Dendritic cell treated with granulocyte-macrophage colony-stimulating factor and Interleukin-4, amounts not matched to agents 40 ng/mL and 50 ng/mL, for 4 days (primary cell): ENCODE measurements at regions of chr4 and their contacts with region 1.

Region 1: GRCh38 chr4:22688236-22688635 is 4.5 kb upstream of the GBA3 start:
- H3K4me3 Mint-ChIP-seq: no peak overlapping the region
- H3K27ac Mint-ChIP-seq: no peak overlapping the region
- H3K4me1 Mint-ChIP-seq: peaks cover 7% of the 10 kb centered on the region
- H3K27me3 Mint-ChIP-seq: peaks cover 2% of the 10 kb centered on the region

Region 2: GRCh38 chr4:21790438-21791029 is 897.7 kb before region 1 on chr4:
- intact Hi-C with region 1: loop called (anchors 2 kb)
- H3K4me3 Mint-ChIP-seq: no peak overlapping the region
- H3K27ac Mint-ChIP-seq: no peak overlapping the region
- H3K4me1 Mint-ChIP-seq: no peaks in the 10 kb centered on the region
- H3K27me3 Mint-ChIP-seq: no peaks in the 10 kb centered on the region

Region 3: GRCh38 chr4:22410645-22411247 is 277.5 kb before region 1 on chr4:
- intact Hi-C with region 1: loop called (anchors 1 kb)
- H3K4me3 Mint-ChIP-seq: no peak overlapping the region
- H3K27ac Mint-ChIP-seq: no peak overlapping the region
- H3K4me1 Mint-ChIP-seq: no peaks in the 10 kb centered on the region
- H3K27me3 Mint-ChIP-seq: no peaks in the 10 kb centered on the region